ENCODE measurements at regions of chr17 and their contacts with region 1.

Region 1: DNA sequence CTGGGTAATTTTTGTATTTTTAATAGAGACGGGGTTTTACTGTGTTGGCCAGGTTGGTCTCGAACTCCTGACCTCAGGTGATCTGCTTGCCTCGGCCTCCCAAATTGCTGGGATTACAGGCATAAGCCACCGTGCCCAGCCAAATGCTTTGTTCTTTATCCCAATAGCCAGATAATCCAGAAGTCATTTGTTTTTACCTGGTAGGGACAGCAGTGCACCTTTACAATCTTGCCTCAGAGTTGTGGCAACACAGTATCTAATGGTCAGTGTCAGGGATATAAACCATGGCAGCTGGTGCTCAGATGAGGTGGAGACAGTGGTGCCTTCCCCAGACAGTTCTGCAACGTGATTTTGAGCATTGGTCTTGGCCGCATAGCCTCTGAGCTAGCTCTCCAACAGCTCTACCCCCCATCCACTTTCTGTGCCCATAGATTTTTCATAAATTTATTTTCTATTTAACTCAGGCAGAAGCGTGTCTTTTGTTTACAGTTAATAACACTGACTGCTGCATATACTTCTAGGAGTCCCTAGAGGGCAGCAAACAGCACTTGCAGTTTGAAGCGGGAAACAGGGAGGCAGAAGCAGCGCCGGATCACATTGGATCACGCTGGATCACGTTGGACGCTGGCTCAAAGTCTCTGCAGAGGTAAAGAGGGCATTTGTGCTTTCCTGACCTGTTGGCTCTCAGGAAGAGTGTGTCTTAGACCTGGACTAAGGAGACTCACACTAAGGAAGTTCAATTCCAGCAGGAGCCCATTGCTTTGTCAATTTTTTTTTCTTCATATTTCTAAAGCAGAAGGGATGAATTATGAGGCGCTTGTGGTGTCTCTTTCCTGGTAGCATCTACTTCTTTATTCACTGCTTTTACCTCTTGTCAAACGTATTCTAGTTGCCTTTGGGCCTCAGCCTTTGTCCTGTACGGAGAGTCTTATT is 5.1 kb upstream of the GGT6 start:
- DNase-seq: peak in 8 of 9 experiments; percentile 20 to 79 (median 50)
- ATAC-seq: peak; percentile 88
- H3K4me3 ChIP-seq: no peak overlapping the region
- H3K4me3 Mint-ChIP-seq: peak overlapping the region; percentile 59
- H3K27ac ChIP-seq: no peak overlapping the region
- H3K27ac Mint-ChIP-seq: no peak overlapping the region
- H3K4me1 ChIP-seq: peaks cover 3% of the 10 kb centered on the region
- H3K4me1 Mint-ChIP-seq: peaks cover 24% of the 10 kb centered on the region
- H3K27me3 ChIP-seq: no peaks in the 10 kb centered on the region
- H3K27me3 Mint-ChIP-seq: no peaks in the 10 kb centered on the region
- CTCF ChIP-seq: peak; percentile 77

Region 2: DNA sequence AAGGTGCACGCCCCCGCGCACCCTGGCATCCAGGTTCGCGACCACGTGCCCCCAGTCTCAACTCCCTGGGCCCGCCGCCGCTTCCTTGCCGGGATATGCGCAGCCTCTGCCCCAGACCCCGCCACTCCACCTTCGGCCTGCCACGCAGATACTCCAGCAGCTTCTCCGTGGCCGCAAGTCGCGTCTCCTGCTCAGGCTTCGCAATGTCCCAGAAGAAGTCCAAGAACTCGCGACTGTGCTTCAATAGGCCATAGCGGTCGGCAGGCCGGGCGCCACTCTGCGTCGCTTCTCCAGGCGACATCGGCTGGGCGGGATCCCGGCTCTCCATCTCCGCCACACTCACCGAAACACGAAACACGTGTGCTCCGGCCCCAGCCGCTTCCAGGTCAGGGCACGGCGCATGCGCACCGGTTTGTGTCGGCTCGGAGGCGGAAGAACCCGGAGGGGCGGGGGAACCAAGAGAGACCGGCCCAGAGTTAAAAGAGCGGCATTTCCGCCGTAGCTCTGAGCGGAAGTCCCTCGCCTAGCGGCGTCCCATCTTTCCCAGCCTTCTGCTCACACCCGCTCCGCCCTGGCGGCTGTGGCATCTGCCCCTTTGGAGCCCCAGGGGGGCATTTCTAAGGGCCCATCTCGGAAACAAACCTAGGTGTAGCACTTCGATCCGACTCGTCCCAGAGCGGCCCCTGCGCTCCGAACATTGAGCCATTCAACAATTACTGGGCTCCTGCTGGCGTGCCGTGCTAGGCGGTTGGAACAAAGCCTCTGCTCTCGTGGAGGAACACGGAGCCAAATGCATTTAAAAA is 10.3 kb before region 1 on chr17 and contains the start of gene MYBBP1A:
- CTCF ChIA-PET with region 1: interaction called, 16 read pairs
- POLR2A ChIA-PET with region 1: no interaction called
- intact Hi-C with region 1: loop called in 1 of 2 experiments (anchors 1 kb)
- DNase-seq: peak; percentile 91 to 99 (median 98)
- ATAC-seq: peak; percentile 93
- H3K4me3 ChIP-seq: peak within 1 kb of the TSS; percentile 80 to 100
- H3K4me3 Mint-ChIP-seq: peak within 1 kb of the TSS; percentile 94
- H3K27ac ChIP-seq: peak within 1 kb of the TSS; percentile 77 to 88
- H3K27ac Mint-ChIP-seq: peak within 1 kb of the TSS; percentile 95
- H3K4me1 ChIP-seq: peaks cover 26% of the 10 kb centered on the region
- H3K4me1 Mint-ChIP-seq: peaks cover 27% of the 10 kb centered on the region
- H3K27me3 ChIP-seq: no peaks in the 10 kb centered on the region
- H3K27me3 Mint-ChIP-seq: no peaks in the 10 kb centered on the region
- CTCF ChIP-seq: no peak
- total RNA-seq, gene MYBBP1A: 69.8 to 71.8 TPM

Region 3: DNA sequence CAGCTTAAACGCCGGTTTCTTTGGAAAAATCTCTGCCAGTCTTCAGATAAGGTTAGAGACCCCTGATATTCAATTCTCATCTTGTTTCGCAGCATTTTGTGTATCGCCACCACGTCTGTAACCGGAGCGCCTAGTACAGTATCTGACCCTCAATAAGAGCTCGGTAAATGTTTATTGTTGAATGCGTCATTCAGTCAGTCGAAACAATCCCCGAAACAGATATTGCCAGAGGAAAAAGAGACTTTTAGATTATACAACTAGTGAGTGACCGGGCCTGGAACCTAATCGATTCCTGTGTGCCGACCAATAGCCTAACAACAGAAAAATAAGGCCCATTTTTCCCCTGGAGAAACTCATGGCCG is 137.8 kb after region 1 on chr17:
- CTCF ChIA-PET with region 1: no interaction called
- POLR2A ChIA-PET with region 1: no interaction called
- intact Hi-C with region 1: loop called in 1 of 2 experiments (anchors 5 kb)
- DNase-seq: no peak
- ATAC-seq: peak; percentile 11
- H3K4me3 ChIP-seq: peak overlapping the region; percentile 83 to 96
- H3K4me3 Mint-ChIP-seq: peak overlapping the region; percentile 92
- H3K27ac ChIP-seq: peak overlapping the region; percentile 86 to 96
- H3K27ac Mint-ChIP-seq: peak overlapping the region; percentile 91
- H3K4me1 ChIP-seq: peaks cover 26% of the 10 kb centered on the region
- H3K4me1 Mint-ChIP-seq: peaks cover 39% of the 10 kb centered on the region
- H3K27me3 ChIP-seq: no peaks in the 10 kb centered on the region
- H3K27me3 Mint-ChIP-seq: no peaks in the 10 kb centered on the region
- CTCF ChIP-seq: no peak

Region 4: GRCh38 chr17:4903051-4903818 is 337.8 kb after region 1 on chr17 and contains the start of gene CHRNE:
- CTCF ChIA-PET with region 1: interaction called, 4 read pairs
- POLR2A ChIA-PET with region 1: no interaction called
- intact Hi-C with region 1: loop called in 1 of 2 experiments (anchors 5 kb)
- DNase-seq: peak; percentile 52 to 92 (median 79)
- ATAC-seq: peak; percentile 25
- H3K4me3 ChIP-seq: peak within 1 kb of the TSS; percentile 14 to 27
- H3K4me3 Mint-ChIP-seq: peak within 1 kb of the TSS; percentile 48
- H3K27ac ChIP-seq: peak within 1 kb of the TSS in 1 of 2 experiments; percentile 50
- H3K27ac Mint-ChIP-seq: peak within 1 kb of the TSS; percentile 76
- H3K4me1 ChIP-seq: peaks cover 51% of the 10 kb centered on the region
- H3K4me1 Mint-ChIP-seq: peaks cover 38% of the 10 kb centered on the region
- H3K27me3 ChIP-seq: no peaks in the 10 kb centered on the region
- H3K27me3 Mint-ChIP-seq: no peaks in the 10 kb centered on the region
- CTCF ChIP-seq: peak; percentile 94
- total RNA-seq, gene CHRNE: 5.5 to 6.1 TPM

Region 5: GRCh38 chr17:4978726-4979125 is 413.3 kb after region 1 on chr17:
- CTCF ChIA-PET with region 1: no interaction called
- POLR2A ChIA-PET with region 1: no interaction called
- intact Hi-C with region 1: no loop called
- DNase-seq: no peak
- ATAC-seq: no peak
- H3K4me3 ChIP-seq: no peak overlapping the region
- H3K4me3 Mint-ChIP-seq: no peak overlapping the region
- H3K27ac ChIP-seq: no peak overlapping the region
- H3K27ac Mint-ChIP-seq: no peak overlapping the region
- H3K4me1 ChIP-seq: peaks cover 9% of the 10 kb centered on the region
- H3K4me1 Mint-ChIP-seq: peaks cover 21% of the 10 kb centered on the region
- H3K27me3 ChIP-seq: no peaks in the 10 kb centered on the region
- H3K27me3 Mint-ChIP-seq: no peaks in the 10 kb centered on the region
- CTCF ChIP-seq: no peak